ENCODE measurements at regions of chr20 and their contacts with region 1.

Region 1: DNA sequence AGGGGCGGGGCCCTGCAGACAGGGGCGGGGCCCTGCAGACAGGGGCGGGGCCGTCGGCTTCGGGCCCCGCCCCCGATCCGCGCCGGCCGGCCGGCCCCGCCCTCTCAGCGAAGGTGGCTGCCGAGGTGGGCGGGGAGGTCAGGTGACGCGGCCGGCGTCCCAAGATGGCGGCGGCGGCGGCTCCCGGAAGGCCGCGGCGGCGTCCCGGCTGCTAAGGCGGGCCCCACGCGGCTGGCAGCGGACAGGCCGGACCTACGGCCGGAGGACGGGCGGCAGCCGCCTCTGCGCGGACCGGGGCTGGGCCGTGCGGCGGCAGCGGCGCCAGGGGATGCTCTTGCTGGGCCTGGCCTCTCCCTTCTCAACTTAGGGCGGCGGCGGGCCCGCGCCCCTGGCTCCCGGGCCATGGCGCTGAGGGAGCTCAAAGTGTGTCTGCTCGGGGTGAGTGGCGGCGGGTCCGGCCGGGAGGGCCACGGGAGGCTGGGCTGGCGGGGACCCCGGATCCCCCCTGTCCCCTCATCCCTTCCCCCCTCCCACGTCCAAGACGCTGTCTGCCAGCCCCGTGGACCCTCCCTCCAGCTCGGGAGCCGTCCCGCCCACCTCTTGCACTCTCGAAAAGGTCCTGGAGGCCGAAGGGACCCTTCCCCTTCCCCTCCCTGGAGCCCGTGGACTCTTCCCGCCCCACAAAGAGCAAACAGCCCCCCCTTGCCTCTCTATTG is at the start of gene RAB22A:
- DNase-seq: peak; percentile 87 to 93
- ATAC-seq: peak; percentile 95
- H3K4me3 ChIP-seq: peak within 1 kb of the TSS; percentile 98 to 99
- H3K27ac ChIP-seq: peak within 1 kb of the TSS in 1 of 2 donors; percentile 87
- H3K4me1 ChIP-seq: no peaks in the 10 kb centered on the region
- H3K27me3 ChIP-seq: no peaks in the 10 kb centered on the region
- total RNA-seq, gene RAB22A: 21.8 to 26.8 TPM

Region 2: GRCh38 chr20:58251921-58252591 is 57.7 kb before region 1 on chr20:
- intact Hi-C with region 1: no loop called
- DNase-seq: no peak
- ATAC-seq: no peak
- H3K4me3 ChIP-seq: no peak overlapping the region
- H3K27ac ChIP-seq: no peak overlapping the region
- H3K4me1 ChIP-seq: peaks cover 0 to 2% of the 10 kb centered on the region in 2 donors
- H3K27me3 ChIP-seq: no peaks in the 10 kb centered on the region

Region 3: GRCh38 chr20:58388882-58389323 is 79.2 kb after region 1 on chr20 and contains the start of gene VAPB:
- intact Hi-C with region 1: loop called in 1 of 2 experiments (anchors 2 kb)
- DNase-seq: peak; percentile 96 to 99
- ATAC-seq: peak; percentile 100
- H3K4me3 ChIP-seq: peak within 1 kb of the TSS; percentile 78 to 88
- H3K27ac ChIP-seq: peak within 1 kb of the TSS; percentile 6 to 82
- H3K4me1 ChIP-seq: peaks cover 0 to under 1% of the 10 kb centered on the region in 2 donors
- H3K27me3 ChIP-seq: no peaks in the 10 kb centered on the region
- total RNA-seq, gene VAPB: 47.6 to 50.6 TPM

Region 4: GRCh38 chr20:58457083-58457695 is 147.5 kb after region 1 on chr20:
- intact Hi-C with region 1: no loop called
- DNase-seq: no peak
- ATAC-seq: no peak
- H3K4me3 ChIP-seq: no peak overlapping the region
- H3K27ac ChIP-seq: no peak overlapping the region
- H3K4me1 ChIP-seq: no peaks in the 10 kb centered on the region
- H3K27me3 ChIP-seq: no peaks in the 10 kb centered on the region

Region 5: GRCh38 chr20:58692594-58693226 is 383.0 kb after region 1 on chr20 and contains the start of gene NPEPL1:
- intact Hi-C with region 1: loop called in 1 of 2 experiments (anchors 5 kb)
- DNase-seq: peak; percentile 81 to 90
- ATAC-seq: peak; percentile 83
- H3K4me3 ChIP-seq: peak within 1 kb of the TSS; percentile 32 to 35
- H3K27ac ChIP-seq: peak within 1 kb of the TSS; percentile 30 to 32
- H3K4me1 ChIP-seq: no peaks in the 10 kb centered on the region
- H3K27me3 ChIP-seq: no peaks in the 10 kb centered on the region
- total RNA-seq, gene NPEPL1: 22.1 to 53.1 TPM

Measured in aorta (tissue), 5 donors.